Activated naive CD8-positive, alpha-beta T cell treated with anti-CD3 and anti-CD28 coated beads, Interleukin-2, amount 10 ng/mL, durations not matched to agents 7 days and 5 days (primary cell): ENCODE measurements at regions of chr2 and their contacts with region 1.

Region 1: DNA sequence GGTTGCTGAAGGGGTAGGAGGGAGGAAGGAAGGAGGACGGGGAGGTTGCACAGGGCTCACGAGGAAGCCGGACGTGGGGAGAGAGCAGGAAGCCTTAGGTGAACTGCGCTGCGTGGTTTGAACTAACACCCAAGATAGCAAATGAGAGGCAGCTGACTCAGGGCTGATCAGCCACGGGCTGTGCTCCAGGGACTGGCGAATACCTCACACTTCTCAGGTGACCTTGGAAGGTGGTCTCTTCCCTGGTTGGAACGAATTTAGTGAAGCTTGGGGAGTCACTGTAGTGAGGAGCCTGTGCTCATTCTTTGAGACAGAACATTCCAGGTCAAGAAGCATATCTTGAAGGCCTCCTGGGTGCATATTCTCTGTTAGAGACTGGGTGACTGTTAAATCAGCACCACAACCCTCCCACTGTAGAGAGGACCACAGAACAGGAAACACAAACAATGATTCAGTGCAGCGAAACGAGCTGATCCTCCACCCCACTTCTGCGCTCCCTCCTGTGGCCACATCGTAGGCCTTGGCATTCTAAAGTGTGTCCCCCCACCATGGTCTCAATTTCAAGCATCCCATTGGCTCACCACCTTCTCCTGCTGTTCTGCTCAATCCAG is 33.8 kb downstream of the TOGARAM2 start:
- DNase-seq: peak; percentile 61
- ATAC-seq: peak; percentile 76
- H3K4me3 Mint-ChIP-seq: peak overlapping the region; percentile 89
- H3K27ac Mint-ChIP-seq: peak overlapping the region; percentile 99
- H3K4me1 Mint-ChIP-seq: peaks cover 63% of the 10 kb centered on the region
- H3K27me3 Mint-ChIP-seq: no peaks in the 10 kb centered on the region

Region 2: DNA sequence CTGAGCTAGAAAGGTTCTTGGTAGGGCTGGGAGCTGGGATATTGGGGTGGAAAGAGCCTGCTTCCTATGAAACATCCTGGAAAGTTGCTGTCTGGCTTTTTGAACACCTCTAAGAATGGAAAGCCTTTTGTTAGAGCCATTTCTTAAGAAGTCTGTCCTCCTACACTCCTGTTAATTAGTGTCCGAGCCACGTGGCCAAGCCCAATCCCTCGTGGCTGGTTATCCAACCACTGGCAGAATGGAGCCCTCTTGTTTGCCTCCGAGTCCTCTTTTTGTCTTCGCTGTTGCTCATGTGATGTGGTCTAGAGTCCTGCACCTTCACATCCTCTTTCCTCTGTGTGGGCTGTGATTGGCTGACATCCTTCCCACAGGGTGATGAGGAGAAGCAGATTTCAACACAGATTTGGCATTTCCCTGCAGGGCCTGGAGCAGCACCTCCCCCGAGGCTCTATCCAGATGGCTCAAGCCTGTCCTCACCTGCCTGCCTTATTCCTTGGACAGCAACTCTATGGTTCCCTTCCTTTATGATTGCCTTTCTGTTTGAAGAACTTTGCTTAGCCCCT is 42.1 kb before region 1 on chr2:
- POLR2A ChIA-PET with region 1: interaction called, 10 read pairs
- DNase-seq: no peak
- ATAC-seq: peak; percentile 72
- H3K4me3 Mint-ChIP-seq: peak overlapping the region; percentile 15
- H3K27ac Mint-ChIP-seq: no peak overlapping the region
- H3K4me1 Mint-ChIP-seq: peaks cover 9% of the 10 kb centered on the region
- H3K27me3 Mint-ChIP-seq: peaks cover 10% of the 10 kb centered on the region

Region 3: GRCh38 chr2:29000481-29000880 is 14.4 kb before region 1 on chr2:
- POLR2A ChIA-PET with region 1: interaction called, 51 read pairs
- DNase-seq: peak; percentile 54
- ATAC-seq: peak; percentile 88
- H3K4me3 Mint-ChIP-seq: peak overlapping the region; percentile 47
- H3K27ac Mint-ChIP-seq: peak overlapping the region; percentile 51
- H3K4me1 Mint-ChIP-seq: peaks cover 22% of the 10 kb centered on the region
- H3K27me3 Mint-ChIP-seq: no peaks in the 10 kb centered on the region

Region 4: DNA sequence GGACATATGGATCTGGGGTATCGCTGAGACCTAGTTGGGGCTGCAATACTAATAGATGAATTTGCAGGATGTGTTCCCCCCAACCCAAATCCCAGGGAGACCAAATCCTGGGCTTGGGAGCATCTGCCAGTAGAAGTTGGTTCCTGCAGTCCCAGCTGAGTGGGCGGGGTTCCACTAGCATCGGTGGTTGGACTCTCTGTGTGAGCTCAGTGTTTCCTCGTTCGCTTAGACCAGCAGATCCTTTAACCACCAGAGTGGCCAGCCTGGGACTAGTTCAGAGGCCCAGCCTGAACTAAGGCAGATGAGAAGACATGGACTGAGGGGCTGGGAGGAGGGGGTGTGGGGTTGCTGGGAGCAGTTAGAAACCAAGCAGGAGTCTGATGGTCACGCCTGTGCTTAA is 18.7 kb after region 1 on chr2:
- POLR2A ChIA-PET with region 1: interaction called, 12 read pairs
- DNase-seq: no peak
- ATAC-seq: no peak
- H3K4me3 Mint-ChIP-seq: no peak overlapping the region
- H3K27ac Mint-ChIP-seq: no peak overlapping the region
- H3K4me1 Mint-ChIP-seq: peaks cover 23% of the 10 kb centered on the region
- H3K27me3 Mint-ChIP-seq: no peaks in the 10 kb centered on the region

Region 5: GRCh38 chr2:29115797-29116781 is 101.2 kb after region 1 on chr2:
- POLR2A ChIA-PET with region 1: interaction called, 18 read pairs
- DNase-seq: peak; percentile 69
- ATAC-seq: peak; percentile 69
- H3K4me3 Mint-ChIP-seq: peak overlapping the region; percentile 92
- H3K27ac Mint-ChIP-seq: peak overlapping the region; percentile 95
- H3K4me1 Mint-ChIP-seq: peaks cover 27% of the 10 kb centered on the region
- H3K27me3 Mint-ChIP-seq: peaks cover 15% of the 10 kb centered on the region